Activated CD8-positive, alpha-beta T cell treated with anti-CD3 and anti-CD28 coated beads, Interleukin-2, amount 10 ng/mL, durations not matched to agents 7 days and 5 days (primary cell): ENCODE measurements at regions of chr22 and their contacts with region 1.

Region 1: DNA sequence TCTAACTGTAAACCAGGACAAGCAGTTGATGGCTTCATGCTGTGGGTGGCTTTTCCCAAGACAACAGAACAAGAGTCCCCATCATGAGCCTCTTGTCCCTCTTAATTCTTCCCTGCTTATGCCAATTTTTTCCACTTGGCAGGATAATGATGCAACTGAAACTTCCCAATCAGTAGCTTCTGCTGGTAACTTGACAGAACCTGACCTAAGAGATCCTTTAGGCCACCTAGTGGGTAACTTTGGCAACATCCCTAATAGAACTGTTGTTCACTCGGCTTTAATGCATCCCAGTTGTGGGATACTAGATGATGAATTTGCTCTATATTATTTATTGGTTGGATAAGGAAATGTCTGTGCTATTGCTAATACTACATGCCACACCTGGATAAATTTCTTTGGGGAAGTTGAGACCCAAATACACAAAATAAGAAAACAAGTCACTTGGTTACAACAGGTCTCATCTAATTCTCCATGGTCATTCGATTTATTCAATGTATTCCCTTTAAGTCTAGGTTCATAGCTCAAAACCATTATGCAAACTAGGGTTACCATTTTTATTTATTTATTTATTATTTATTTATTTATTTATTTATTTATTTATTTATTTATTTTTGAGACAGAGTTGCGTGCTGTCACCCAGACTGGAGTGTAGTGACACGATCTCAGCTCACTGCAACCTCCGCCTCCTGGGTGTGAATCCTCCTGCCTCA is 41.4 kb upstream of the NFAM1 start:
- DNase-seq: peak; percentile 39
- ATAC-seq: peak; percentile 71
- H3K4me3 Mint-ChIP-seq: no peak overlapping the region
- H3K27ac Mint-ChIP-seq: no peak overlapping the region
- H3K4me1 Mint-ChIP-seq: peaks cover 9% of the 10 kb centered on the region
- H3K27me3 Mint-ChIP-seq: peaks cover 25% of the 10 kb centered on the region

Region 2: DNA sequence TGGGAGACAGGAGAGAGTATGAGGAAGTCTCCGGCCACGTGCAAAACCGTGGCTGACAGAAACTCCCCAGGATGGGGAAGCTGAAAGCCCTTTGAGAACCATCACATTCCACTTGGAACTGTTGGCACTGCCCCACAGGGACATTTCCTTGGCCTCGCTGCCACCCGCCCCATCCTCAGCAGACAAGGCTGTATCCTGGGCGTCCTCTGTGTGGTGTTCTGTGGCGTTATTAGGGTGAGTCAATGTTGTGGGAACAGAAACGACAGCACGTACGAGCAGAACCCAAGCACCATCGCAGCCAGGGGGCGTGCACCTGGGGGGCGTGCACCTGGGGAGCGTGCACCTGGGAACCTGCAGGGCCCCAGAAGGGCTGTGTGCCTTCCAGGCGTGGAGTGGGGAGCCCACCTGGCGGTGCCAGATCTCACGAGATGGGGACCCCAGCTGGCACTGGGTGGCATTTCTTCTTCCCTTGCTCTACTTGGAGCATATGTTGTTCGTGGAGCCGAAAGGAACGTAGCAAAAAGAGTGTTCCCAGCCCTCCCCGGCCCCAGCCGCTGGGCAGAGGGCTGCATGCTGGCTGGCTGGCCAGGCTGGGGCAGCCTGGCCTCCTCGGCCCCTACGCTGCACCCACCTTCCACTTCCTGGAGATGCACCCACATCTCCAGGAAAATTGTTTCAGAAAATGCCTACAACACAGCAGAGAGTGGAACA is 76.9 kb before region 1 on chr22:
- CTCF ChIA-PET with region 1: no interaction called
- POLR2A ChIA-PET with region 1: no interaction called
- DNase-seq: no peak
- ATAC-seq: no peak
- H3K4me3 Mint-ChIP-seq: no peak overlapping the region
- H3K27ac Mint-ChIP-seq: no peak overlapping the region
- H3K4me1 Mint-ChIP-seq: peaks cover 11% of the 10 kb centered on the region
- H3K27me3 Mint-ChIP-seq: peaks cover 13% of the 10 kb centered on the region

Region 3: DNA sequence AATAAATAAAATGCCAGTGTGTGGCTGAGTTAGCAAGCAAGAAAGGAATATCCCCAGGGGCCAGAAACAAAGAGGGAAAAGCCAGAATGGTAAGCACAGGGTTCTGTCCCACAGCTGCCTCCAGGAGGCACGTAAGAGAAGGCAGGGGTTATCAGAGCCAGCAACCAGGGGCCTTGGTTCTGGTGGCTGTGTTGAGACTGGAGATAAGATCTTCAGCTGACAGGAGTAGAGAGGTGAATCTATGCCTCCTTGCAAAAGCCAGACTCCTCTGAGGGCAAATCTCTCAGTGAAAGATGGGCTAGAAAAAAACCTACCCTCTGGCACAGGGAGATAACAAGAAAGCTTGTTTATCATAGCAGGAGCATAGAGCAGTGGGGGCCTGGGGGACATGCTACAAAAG is 11.6 kb before region 1 on chr22:
- CTCF ChIA-PET with region 1: interaction called, 11 read pairs
- POLR2A ChIA-PET with region 1: no interaction called
- DNase-seq: no peak
- ATAC-seq: no peak
- H3K4me3 Mint-ChIP-seq: no peak overlapping the region
- H3K27ac Mint-ChIP-seq: no peak overlapping the region
- H3K4me1 Mint-ChIP-seq: no peaks in the 10 kb centered on the region
- H3K27me3 Mint-ChIP-seq: peaks cover 21% of the 10 kb centered on the region

Region 4: DNA sequence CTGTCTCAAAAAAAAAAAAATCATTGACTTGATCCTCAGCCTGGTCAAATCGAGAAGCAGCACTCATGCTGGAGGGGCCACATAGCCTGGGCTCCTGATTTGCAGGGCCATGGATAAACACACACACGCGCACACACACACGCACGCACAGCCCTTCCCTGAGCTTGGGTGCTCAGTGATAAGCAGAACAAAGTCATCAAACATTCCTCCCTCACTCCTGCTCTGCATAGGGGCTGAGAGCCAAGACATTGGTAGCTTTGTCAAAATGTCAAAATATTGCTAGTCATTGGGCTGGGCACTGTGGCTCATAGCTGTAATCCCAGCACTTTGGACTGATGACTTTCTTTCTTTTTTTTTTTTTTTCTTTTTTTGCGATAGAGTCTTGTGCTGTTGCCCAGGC is 281.0 kb after region 1 on chr22:
- CTCF ChIA-PET with region 1: no interaction called
- POLR2A ChIA-PET with region 1: no interaction called
- DNase-seq: no peak
- ATAC-seq: no peak
- H3K4me3 Mint-ChIP-seq: no peak overlapping the region
- H3K27ac Mint-ChIP-seq: no peak overlapping the region
- H3K4me1 Mint-ChIP-seq: no peaks in the 10 kb centered on the region
- H3K27me3 Mint-ChIP-seq: no peaks in the 10 kb centered on the region